Right ventricle myocardium superior (tissue), 1 donor: ENCODE measurements at regions of chr1 and their contacts with region 1.

Region 1: GRCh38 chr1:153749408-153750005 is 21.7 kb downstream of the INTS3 start:
- DNase-seq: peak; percentile 91
- ATAC-seq: peak; percentile 95

Region 2: DNA sequence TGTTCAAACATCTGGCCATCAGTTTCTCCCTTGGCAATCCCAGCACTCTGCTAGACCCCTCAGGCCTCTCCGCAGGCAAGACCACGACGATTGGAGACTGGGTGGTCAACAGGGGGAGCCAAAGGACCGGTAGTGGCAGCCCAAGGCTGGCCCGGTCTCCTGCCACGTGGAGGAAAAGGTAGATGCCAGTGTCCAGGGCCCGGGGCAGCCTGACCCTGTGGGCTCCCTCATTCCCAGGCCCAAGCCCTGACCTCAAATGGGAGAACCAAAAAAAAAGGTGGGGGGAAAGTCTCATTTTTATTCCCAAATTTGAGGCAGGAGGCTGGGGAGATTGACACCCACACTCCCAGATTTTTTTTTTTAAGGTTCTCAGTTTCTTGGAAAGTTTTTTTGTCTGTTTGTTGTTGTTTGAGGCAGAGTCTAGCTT is 238.5 kb before region 1 on chr1:
- intact Hi-C with region 1: loop called (anchors 10 kb)
- DNase-seq: peak; percentile 88
- ATAC-seq: peak; percentile 73

Region 3: DNA sequence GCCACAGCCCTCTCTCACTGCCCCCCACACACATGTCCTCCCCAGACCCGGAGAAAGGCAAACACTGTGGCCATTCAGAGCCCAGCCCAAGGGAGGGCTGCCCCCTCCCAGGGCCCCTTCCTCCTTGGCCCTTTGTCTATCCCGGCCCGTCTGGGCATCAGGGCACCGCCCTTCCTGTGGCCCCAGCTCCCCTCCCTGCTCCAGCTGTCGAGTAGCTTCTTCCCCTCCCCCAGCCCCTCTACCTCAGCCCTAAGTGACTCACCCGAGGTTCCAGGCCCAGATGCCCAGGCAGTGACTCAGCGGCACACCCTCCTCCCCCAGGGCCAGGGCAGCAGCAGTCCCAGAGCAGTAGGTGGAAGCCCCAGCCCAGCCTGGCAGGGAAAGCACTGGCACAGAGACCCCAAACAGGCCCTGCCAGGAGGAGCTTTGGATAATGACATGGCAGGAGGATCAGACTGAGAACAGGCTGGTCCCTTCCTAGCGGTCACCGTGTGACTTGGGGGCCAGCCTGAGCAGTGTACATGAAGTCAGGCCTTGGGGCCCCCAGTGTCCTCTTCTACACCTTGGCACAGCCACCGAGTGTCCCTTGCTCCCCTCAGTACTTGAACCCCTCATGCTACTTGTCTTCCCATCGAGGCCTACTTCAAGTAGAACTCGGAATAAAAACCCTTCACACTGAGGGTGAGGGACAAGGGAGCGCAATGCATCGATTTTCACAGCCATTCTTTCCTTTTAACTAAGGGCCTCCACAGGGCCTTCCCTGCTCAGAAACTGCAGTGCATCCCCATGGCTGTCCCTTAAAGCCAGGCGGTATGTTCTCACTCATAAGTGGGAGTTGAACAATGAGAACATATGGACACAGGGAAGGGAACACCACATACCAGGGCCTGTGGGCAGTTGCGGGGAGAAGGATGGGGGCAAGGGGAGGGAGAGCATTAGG is 182.8 kb before region 1 on chr1:
- intact Hi-C with region 1: no loop called
- DNase-seq: peak; percentile 94
- ATAC-seq: peak; percentile 90

Region 4: DNA sequence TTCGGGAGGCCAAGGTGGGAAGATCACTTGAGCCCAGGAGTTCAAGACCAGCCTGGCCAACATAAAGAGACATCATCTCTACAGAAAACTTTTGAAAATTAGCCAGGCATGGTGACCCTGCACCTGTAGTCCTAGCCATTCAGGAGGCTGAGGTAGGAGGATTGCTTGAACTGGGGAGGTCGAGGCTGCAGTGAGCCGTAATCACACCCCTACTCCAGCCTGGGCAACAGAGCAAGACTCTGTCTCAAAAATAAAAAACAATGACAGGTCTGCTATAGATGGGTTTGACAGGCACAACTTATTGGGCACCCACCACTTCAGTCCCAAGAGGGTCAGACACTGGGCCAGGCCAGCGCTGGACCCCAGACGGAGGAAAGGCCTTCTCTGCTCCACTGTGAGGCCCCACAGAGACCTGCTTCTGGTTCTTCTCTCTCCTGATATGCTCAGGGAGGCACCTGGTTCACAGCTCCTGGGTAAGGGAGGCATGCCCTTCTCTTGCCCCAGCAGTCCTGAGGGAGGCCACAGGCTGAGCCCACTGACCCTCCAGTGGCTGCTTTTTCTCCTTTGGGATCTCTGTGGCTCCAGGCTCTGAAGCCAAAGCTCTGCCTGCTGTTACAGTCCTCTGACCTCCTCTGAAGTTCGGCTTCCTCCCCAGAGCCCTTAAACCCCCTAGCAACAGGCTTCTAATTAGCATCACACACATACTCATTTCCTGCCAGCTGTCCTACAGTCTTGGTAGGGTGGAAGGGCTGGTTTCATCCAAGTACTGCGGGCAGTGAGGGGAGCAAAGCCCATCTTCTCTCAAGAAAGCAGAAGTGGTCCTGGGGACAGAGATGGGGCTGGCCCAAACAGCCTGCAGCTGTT is 151.0 kb before region 1 on chr1:
- intact Hi-C with region 1: no loop called
- DNase-seq: no peak
- ATAC-seq: peak; percentile 27

Region 5: DNA sequence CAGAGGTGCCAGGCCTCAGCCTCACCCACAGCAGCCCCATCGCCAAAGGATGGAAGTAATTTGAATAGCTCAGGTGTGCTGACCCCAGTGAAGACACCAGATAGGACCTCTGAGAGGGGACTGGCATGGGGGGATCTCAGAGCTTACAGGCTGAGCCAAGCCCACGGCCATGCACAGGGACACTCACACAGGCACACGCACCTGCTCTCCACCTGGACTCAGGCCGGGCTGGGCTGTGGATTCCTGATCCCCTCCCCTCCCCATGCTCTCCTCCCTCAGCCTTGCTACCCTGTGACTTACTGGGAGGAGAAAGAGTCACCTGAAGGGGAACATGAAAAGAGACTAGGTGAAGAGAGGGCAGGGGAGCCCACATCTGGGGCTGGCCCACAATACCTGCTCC is 56.0 kb before region 1 on chr1:
- intact Hi-C with region 1: loop called (anchors 5 kb)
- DNase-seq: no peak
- ATAC-seq: no peak